ENCODE measurements at regions of chr16 and their contacts with region 1.

Region 1: GRCh38 chr16:53503270-53503923 is 388 bp upstream of the AKTIP start:
- DNase-seq: peak; percentile 100
- H3K4me3 ChIP-seq: peak overlapping the region; percentile 88 to 98 (median 90)
- H3K27ac ChIP-seq: peak overlapping the region; percentile 95 to 98 (median 96)
- H3K4me1 ChIP-seq: peaks cover 28 to 36% (median 32%) of the 10 kb centered on the region in 4 donors
- H3K27me3 ChIP-seq: no peaks in the 10 kb centered on the region
- CTCF ChIP-seq: peak in 1 of 7 experiments; percentile 8
- EP300 ChIP-seq: peak; percentile 17
- POLR2A ChIP-seq: peak in 2 of 4 donors; percentile 82 to 87

Region 2: GRCh38 chr16:53434377-53435065 is 68.9 kb before region 1 on chr16 and contains the start of gene RBL2:
- intact Hi-C with region 1: loop called (anchors 5 kb)
- DNase-seq: peak; percentile 87 to 96
- H3K4me3 ChIP-seq: peak within 1 kb of the TSS; percentile 87 to 100 (median 94)
- H3K27ac ChIP-seq: peak within 1 kb of the TSS; percentile 96 to 99 (median 98)
- H3K4me1 ChIP-seq: peaks cover 14 to 40% (median 27%) of the 10 kb centered on the region in 4 donors
- H3K27me3 ChIP-seq: no peaks in the 10 kb centered on the region
- CTCF ChIP-seq: no peak
- EP300 ChIP-seq: no peak
- POLR2A ChIP-seq: no peak
- total RNA-seq, gene RBL2: 79.7 to 234 (median 95.3) TPM

Measured in stomach (tissue), 19 donors.